Endothelial cell of umbilical vein (primary cell): ENCODE measurements at regions of chr6 and their contacts with region 1.

Region 1: GRCh38 chr6:152484806-152485205 is 152.4 kb downstream of the SYNE1 start:
- DNase-seq: peak; percentile 92
- H3K4me3 ChIP-seq: no peak overlapping the region
- H3K27ac ChIP-seq: no peak overlapping the region
- H3K4me1 ChIP-seq: peaks cover 14% of the 10 kb centered on the region
- H3K27me3 ChIP-seq: no peaks in the 10 kb centered on the region
- CTCF ChIP-seq: no peak
- POLR2A ChIP-seq: no peak

Region 2: GRCh38 chr6:151842816-151843215 is 642.0 kb before region 1 on chr6:
- CTCF ChIA-PET with region 1: no interaction called
- POLR2A ChIA-PET with region 1: no interaction called
- dilution Hi-C with region 1: no loop called
- intact Hi-C with region 1: no loop called
- DNase-seq: no peak
- H3K4me3 ChIP-seq: no peak overlapping the region
- H3K27ac ChIP-seq: no peak overlapping the region
- H3K4me1 ChIP-seq: no peaks in the 10 kb centered on the region
- H3K27me3 ChIP-seq: no peaks in the 10 kb centered on the region
- CTCF ChIP-seq: no peak
- POLR2A ChIP-seq: no peak

Region 3: DNA sequence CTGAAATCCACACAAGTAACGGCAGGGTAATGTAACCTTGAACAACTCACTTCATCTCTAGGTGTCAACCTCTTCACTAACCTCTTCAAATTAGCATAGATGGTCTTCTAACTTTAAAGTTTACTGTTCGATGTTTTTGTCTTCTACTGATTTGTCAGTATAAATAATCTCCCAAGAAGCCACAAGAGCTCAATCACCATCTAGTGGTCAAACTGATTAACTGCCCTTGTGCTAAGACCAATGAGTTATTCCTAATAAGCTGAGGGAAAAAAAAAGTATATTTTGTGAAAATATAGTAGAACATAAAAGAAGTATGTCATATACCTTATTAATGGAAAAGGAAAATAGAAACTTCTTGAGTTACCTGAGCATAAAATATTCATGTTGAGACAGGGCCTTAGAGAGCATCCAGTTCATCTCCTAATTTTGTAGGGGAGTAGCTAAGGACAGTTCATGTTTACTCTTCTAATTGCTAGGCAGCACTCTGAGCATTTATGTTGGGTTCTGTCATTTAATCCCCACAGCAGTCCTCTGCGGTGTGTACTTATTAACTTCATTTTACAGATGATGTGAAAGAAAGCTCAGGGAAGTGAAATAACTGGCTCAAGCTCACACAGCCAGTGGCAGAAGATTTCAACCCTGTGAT is 360.3 kb before region 1 on chr6:
- CTCF ChIA-PET with region 1: no interaction called
- POLR2A ChIA-PET with region 1: no interaction called
- dilution Hi-C with region 1: no loop called
- intact Hi-C with region 1: no loop called
- DNase-seq: peak; percentile 81
- H3K4me3 ChIP-seq: no peak overlapping the region
- H3K27ac ChIP-seq: no peak overlapping the region
- H3K4me1 ChIP-seq: peaks cover 1% of the 10 kb centered on the region
- H3K27me3 ChIP-seq: no peaks in the 10 kb centered on the region
- CTCF ChIP-seq: peak; percentile 53 to 55
- POLR2A ChIP-seq: no peak

Region 4: GRCh38 chr6:152170705-152171667 is 313.8 kb before region 1 on chr6:
- CTCF ChIA-PET with region 1: no interaction called
- POLR2A ChIA-PET with region 1: no interaction called
- dilution Hi-C with region 1: no loop called
- intact Hi-C with region 1: no loop called
- DNase-seq: no peak
- H3K4me3 ChIP-seq: no peak overlapping the region
- H3K27ac ChIP-seq: no peak overlapping the region
- H3K4me1 ChIP-seq: no peaks in the 10 kb centered on the region
- H3K27me3 ChIP-seq: no peaks in the 10 kb centered on the region
- CTCF ChIP-seq: no peak
- POLR2A ChIP-seq: no peak

Region 5: DNA sequence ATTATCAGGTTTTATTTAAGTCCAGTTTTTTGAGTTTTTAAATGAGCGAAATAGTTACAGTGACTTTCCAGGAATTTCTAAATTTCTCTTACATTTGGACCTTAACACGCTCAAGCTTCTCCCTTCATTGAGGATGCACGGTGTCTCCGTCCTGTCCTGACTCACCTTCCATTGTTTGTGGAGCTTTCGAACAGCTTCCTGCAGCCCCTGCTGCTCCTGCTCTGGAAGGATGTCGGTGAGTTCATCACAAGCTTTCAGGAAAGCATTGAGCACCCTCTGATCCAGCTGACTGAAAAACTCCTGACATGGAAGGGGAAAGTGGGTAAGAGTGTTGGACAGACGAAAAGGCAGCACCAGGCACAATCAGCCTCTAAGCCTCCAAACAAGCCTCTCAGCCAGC is 31.4 kb before region 1 on chr6:
- CTCF ChIA-PET with region 1: interaction called, 11 read pairs
- POLR2A ChIA-PET with region 1: no interaction called
- dilution Hi-C with region 1: no loop called
- intact Hi-C with region 1: no loop called
- DNase-seq: peak; percentile 63
- H3K4me3 ChIP-seq: no peak overlapping the region
- H3K27ac ChIP-seq: no peak overlapping the region
- H3K4me1 ChIP-seq: peaks cover 6% of the 10 kb centered on the region
- H3K27me3 ChIP-seq: no peaks in the 10 kb centered on the region
- CTCF ChIP-seq: no peak
- POLR2A ChIP-seq: no peak

Region 6: DNA sequence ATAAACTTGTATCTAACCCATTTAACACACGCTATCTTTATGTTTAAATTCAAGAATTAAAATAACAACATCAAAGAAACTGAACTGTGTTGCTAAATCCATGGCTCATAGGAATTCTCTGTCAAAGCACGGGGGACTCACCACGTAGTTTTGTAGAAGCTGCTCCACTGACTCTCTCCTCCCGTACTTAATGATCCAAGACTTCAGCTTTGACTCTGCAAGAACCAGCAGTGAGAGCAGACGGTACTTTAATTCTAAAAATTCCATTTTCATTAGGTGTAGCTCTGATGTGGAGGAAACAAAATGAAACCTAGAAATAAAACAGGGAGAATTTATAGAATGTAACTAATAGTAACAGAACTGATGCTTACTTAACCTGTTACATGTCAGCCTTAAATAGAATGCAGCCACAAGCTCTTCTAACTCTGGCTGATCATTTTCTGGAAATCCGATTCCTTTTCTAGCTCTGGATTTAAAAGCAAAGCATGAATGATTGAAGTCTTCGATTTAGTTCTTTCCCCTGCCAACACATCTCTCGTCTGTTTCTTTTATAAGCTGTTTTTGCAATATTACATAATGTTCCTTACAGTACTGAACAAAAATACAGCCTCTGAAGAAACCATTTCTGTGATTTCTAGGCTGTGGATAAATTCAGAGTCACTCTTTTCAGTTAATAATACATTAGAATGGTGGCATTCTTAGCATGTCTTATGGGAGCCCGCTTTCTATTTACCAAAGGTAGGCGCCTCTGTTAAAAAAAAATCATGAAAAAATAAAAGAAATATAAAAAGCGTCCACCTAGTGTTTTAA is 13.1 kb before region 1 on chr6:
- CTCF ChIA-PET with region 1: interaction called, 10 read pairs
- POLR2A ChIA-PET with region 1: no interaction called
- dilution Hi-C with region 1: no loop called
- intact Hi-C with region 1: no loop called
- DNase-seq: no peak
- H3K4me3 ChIP-seq: no peak overlapping the region
- H3K27ac ChIP-seq: no peak overlapping the region
- H3K4me1 ChIP-seq: no peaks in the 10 kb centered on the region
- H3K27me3 ChIP-seq: no peaks in the 10 kb centered on the region
- CTCF ChIP-seq: no peak
- POLR2A ChIP-seq: no peak

Region 7: DNA sequence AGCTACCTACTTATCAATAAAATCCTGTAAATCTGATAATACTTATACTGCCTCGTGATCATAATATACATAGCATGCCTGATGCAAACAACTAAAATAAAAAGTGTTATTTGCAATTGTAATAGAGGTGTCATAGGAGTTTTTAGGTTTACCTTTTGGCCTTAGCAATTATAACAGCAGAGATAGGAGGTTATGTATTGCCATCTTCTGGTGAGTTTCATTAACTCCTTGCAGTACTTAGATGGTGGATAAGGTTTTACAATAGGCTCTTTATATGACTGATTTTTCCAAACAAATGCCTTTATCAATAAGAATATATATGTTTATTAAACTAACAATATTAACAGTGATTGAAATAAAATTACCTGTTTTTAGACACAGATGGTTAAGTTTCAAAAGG is 185.1 kb after region 1 on chr6:
- CTCF ChIA-PET with region 1: interaction called, 46 read pairs
- POLR2A ChIA-PET with region 1: no interaction called
- dilution Hi-C with region 1: no loop called
- intact Hi-C with region 1: loop called (anchors 1 kb)
- DNase-seq: peak; percentile 67
- H3K4me3 ChIP-seq: no peak overlapping the region
- H3K27ac ChIP-seq: no peak overlapping the region
- H3K4me1 ChIP-seq: peaks cover 44% of the 10 kb centered on the region
- H3K27me3 ChIP-seq: no peaks in the 10 kb centered on the region
- CTCF ChIP-seq: peak; percentile 8 to 22
- POLR2A ChIP-seq: no peak

Region 8: DNA sequence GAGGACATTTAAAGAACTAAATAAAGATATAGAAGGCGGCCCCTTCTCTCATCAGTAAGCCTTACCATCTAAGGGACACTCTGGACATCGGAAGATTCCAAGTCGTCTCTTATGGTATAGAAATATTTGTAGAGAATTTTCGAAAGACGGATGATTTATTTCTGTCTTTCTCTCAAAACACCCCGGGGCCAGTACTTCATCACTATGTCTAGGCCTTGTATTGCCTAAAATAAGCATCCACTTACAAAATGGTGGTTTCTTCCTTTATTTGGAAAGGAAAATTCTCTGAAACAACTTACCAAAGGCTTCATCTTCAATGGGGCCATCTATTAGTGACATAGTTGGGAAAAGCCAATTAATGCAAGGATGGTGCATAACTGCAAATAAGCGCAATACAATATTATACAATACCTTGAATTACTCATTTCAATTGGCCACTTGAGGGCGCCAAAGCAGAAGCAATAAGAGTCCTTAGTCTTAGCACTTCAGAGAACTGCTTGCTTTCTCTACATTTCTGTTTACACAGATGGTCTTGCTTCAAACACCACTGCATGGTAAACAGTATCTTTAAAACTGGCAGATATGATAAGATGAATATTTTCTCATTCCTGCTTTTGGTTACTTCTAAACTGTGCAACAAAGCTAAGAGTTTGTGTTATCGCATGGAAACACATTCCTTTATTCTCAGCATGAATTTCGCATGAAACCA is 379.0 kb after region 1 on chr6:
- CTCF ChIA-PET with region 1: no interaction called
- POLR2A ChIA-PET with region 1: no interaction called
- dilution Hi-C with region 1: no loop called
- intact Hi-C with region 1: loop called (anchors 5 kb)
- DNase-seq: peak; percentile 78
- H3K4me3 ChIP-seq: no peak overlapping the region
- H3K27ac ChIP-seq: no peak overlapping the region
- H3K4me1 ChIP-seq: no peaks in the 10 kb centered on the region
- H3K27me3 ChIP-seq: no peaks in the 10 kb centered on the region
- CTCF ChIP-seq: peak; percentile 48 to 54
- POLR2A ChIP-seq: no peak